ENCODE measurements at regions of chr11 and their contacts with region 1.

Region 1: GRCh38 chr11:77047007-77047927 is 13.1 kb downstream of the B3GNT6 start:
- DNase-seq: peak; percentile 73
- H3K4me3 Mint-ChIP-seq: peak overlapping the region; percentile 28
- H3K27ac Mint-ChIP-seq: peak overlapping the region; percentile 1
- H3K4me1 Mint-ChIP-seq: peaks cover 10% of the 10 kb centered on the region
- H3K27me3 Mint-ChIP-seq: peaks cover 19% of the 10 kb centered on the region

Region 2: GRCh38 chr11:76752321-76753185 is 294.7 kb before region 1 on chr11:
- intact Hi-C with region 1: no loop called
- DNase-seq: no peak
- H3K4me3 Mint-ChIP-seq: no peak overlapping the region
- H3K27ac Mint-ChIP-seq: no peak overlapping the region
- H3K4me1 Mint-ChIP-seq: peaks cover 1% of the 10 kb centered on the region
- H3K27me3 Mint-ChIP-seq: peaks cover 1% of the 10 kb centered on the region

Region 3: DNA sequence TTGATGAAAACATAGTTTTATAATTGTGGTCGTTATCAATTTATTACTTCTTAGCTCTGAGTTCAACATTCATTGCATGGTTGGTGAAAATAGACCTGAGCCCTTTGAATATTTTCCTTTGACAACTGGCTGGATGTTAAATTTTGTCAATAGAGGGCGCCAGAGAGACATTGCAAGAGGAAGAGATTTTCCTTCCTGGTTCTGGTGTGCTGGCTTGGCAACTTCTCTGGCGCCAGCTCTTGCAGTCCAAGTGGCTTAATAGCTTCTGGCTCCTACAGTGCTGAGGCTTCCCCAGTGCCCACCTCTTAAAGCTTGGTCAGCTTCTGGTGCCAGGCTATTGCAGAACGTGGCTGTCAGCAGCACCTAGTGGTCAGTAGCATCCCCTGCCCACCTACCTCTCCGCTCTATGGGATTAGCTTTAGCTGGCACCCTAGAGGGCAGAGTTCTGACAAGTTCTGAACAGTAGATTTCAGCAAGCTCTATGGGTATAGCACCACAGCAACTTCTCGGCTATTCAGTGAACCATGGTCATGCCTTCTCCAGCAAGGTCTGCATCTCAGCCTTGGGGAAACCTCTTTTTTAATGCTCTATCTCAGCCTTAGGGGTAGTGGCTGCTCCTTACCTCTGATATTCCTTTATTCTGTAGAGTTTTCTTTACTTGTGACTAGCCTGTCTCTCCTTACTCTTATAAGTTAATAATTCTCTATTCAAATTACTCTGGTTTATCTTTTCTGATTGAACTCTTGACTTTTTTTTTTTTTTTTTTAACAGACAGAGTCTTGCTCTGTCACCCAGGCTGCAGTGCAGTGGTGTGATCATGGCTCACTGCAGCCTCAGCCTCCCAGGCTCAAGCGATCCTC is 127.2 kb before region 1 on chr11:
- intact Hi-C with region 1: loop called (anchors 5 kb)
- DNase-seq: peak; percentile 49
- H3K4me3 Mint-ChIP-seq: no peak overlapping the region
- H3K27ac Mint-ChIP-seq: no peak overlapping the region
- H3K4me1 Mint-ChIP-seq: peaks cover 14% of the 10 kb centered on the region
- H3K27me3 Mint-ChIP-seq: peaks cover 3% of the 10 kb centered on the region

Region 4: DNA sequence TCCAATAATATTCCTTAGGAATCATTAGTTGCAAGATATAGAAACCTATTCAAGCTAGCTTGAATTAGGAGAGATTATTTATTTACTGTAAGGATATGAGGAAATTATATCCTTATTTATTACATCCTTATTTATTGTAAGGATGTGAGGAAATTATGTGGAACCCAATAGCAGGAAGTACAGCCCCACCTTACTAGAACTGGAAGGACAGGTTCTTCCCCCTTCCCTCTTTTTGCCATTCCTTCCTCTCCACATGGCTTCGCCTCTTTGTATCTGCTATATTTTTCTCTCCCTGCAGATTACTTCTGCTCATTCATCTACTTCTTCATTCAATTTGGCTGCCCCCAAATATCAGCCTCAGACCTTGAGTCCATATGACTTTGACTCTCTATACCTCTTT is 62.5 kb before region 1 on chr11:
- intact Hi-C with region 1: no loop called
- DNase-seq: no peak
- H3K4me3 Mint-ChIP-seq: no peak overlapping the region
- H3K27ac Mint-ChIP-seq: no peak overlapping the region
- H3K4me1 Mint-ChIP-seq: no peaks in the 10 kb centered on the region
- H3K27me3 Mint-ChIP-seq: no peaks in the 10 kb centered on the region

Region 5: GRCh38 chr11:77066229-77067042 is 19.2 kb after region 1 on chr11 and contains the start of gene CAPN5:
- intact Hi-C with region 1: loop called (anchors 1 kb)
- DNase-seq: peak; percentile 79
- H3K4me3 Mint-ChIP-seq: peak within 1 kb of the TSS; percentile 87
- H3K27ac Mint-ChIP-seq: peak within 1 kb of the TSS; percentile 50
- H3K4me1 Mint-ChIP-seq: peaks cover 4% of the 10 kb centered on the region
- H3K27me3 Mint-ChIP-seq: peaks cover 19% of the 10 kb centered on the region
- total RNA-seq, gene CAPN5: 0.32 and 0.55 TPM in 2 replicates

Region 6: DNA sequence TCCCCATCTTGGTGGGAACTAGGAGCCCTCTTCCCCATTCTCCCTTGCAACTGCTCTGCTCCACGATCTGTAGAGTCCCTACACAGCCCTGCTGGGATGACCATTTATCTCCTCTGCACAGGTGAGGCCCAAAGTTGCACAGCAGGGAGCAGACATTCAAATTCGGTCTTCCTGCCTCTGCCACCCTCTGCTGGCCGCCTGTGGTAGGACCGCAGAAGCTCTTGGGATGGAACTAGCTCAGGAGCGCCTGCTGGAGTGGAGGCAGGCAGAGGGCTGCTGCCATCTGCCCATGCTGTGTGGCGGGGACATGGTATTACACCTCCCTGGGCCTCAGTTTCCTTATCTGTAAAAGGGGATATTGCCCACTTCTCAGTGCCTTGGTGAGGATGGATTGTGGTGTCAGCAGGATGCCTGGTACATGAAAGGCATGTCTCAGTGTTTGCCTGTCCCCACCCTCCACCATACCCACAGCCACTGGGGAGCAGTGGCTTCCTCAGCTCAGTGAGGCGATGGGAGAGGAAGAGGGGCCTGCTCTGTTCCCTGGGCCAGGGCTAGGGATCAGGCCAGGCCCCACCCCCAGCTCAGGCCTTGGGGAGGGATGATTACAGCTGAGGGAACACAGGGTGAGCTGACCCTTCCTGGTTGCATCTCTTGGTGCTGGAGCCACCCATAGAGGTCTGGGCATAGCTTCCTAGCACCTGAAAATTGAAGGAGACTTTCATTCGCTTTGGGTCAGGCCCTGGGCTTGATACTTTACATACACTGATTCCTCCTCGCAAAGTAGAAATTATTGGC is 44.1 kb after region 1 on chr11:
- intact Hi-C with region 1: loop called (anchors 1 kb)
- DNase-seq: peak; percentile 70
- H3K4me3 Mint-ChIP-seq: no peak overlapping the region
- H3K27ac Mint-ChIP-seq: no peak overlapping the region
- H3K4me1 Mint-ChIP-seq: peaks cover 6% of the 10 kb centered on the region
- H3K27me3 Mint-ChIP-seq: no peaks in the 10 kb centered on the region

Region 7: DNA sequence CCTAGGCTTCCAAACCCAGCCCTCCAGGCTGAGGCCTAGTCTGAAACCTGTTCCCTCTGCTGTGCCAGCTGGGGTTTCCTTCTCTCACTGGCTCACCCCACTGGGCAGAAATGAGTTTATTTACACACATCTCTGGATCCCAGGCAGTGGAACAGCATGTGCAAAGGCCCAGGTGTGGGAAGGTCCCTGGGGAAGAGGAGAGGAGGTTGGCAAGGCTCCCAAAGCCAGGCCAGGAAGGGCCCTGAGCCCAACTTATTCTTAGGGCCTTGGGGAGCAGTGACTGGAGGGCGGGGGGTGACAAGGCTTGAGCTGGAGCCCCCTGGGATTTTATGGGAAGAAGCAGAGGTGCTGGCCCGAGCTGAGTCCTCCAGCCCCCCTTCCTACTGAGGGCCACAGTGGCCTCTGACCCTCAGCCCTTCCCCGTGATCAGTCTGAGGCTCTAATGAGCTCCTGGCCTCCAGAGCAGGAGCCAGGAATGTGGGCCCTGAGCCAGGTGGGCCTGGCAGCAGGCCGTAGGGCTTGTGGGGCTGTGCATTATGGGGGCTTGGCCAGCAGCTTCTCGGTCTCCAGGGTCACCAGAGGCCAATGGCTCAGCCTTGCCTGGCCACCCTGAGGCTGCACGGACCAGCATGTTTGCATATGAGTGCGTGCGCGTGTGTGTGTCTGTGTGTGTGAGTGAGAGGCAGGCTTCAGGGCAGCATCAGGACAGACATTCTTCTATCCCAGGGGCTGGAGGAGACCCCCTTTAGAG is 83.7 kb after region 1 on chr11:
- intact Hi-C with region 1: no loop called
- DNase-seq: no peak
- H3K4me3 Mint-ChIP-seq: no peak overlapping the region
- H3K27ac Mint-ChIP-seq: no peak overlapping the region
- H3K4me1 Mint-ChIP-seq: peaks cover 4% of the 10 kb centered on the region
- H3K27me3 Mint-ChIP-seq: peaks cover 5% of the 10 kb centered on the region

Region 8: DNA sequence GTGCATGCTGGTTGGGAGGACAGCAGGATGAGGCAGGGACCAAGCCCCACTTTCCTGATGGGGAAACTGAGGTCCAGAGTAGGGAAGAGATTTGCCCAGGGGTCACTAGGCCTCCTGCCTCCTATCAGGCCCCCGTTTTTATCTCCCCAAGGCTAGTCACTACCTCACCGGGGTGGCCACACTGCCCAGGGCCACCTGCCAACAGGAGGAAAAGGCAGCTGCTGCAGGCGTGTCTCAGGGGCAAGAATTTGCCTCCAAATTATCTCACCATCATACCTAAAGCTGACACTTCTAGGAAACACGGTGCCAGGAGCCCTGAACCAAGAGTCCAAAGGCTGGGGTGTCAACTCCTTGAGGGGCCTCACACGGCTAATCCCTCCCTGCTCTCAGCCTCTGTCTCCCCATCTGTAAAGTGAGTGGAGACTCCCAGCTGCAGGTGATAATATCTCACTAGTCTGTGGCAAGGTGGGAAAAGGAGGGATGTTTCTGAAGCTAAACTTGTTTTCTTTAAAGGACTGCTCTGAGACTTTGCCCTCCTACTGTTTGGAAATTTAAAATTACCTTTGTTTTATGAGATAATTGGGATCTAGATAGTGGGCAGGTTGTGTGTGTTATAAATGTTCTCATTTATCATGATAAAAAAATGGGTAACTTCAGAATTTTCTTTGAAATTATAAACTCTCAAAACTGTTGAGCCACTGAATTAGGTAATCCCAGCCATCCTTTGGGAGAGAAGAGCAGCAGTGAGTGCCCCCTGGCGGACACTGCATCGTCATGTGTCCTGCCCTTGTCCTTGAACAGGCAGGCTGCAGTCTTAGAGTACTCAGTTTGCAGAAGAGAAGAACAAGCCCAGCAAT is 140.7 kb after region 1 on chr11:
- intact Hi-C with region 1: loop called (anchors 2 kb)
- DNase-seq: peak; percentile 53
- H3K4me3 Mint-ChIP-seq: no peak overlapping the region
- H3K27ac Mint-ChIP-seq: no peak overlapping the region
- H3K4me1 Mint-ChIP-seq: no peaks in the 10 kb centered on the region
- H3K27me3 Mint-ChIP-seq: no peaks in the 10 kb centered on the region

Region 9: DNA sequence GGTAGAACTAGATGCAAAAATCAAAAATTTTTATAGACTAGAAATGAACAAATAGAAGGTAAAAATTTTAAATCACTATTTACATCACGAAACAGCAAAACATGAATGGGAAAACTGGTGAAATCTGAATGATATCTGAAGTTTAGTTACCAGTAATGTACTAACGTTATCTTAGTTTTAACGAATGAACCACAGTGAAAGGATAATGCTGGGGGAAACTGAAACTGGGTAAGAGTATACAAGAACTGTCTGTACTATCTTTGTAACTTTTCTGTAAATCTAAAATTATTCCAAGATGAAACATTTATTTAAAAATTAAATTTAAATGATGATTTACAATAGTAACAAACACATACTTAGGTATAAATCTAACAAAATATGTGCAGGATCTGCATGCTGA is 246.8 kb after region 1 on chr11:
- intact Hi-C with region 1: no loop called
- DNase-seq: no peak
- H3K4me3 Mint-ChIP-seq: no peak overlapping the region
- H3K27ac Mint-ChIP-seq: no peak overlapping the region
- H3K4me1 Mint-ChIP-seq: peaks cover 4% of the 10 kb centered on the region
- H3K27me3 Mint-ChIP-seq: peaks cover 28% of the 10 kb centered on the region